ENCODE measurements at regions of chr12 and their contacts with region 1.

Region 1: DNA sequence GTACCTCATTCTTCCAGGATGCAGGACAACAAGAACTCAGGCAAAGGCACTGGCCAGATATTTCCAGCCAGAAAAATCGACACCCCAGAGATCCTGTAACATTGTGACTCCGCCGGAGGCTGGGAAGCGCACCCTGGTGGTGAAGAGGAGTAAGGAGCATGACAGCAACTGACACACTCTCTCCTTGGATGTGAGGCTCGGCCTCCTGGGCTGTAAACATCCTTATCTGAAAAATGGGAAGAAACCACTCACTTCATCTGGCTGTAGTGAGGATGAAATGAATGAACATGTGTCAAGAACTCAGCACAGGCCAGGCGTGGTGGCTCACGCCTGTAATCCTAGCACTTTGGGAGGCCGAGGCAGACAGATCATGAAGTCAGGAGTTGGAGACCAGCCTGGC is 27.5 kb downstream of the TCHP start:
- DNase-seq: peak; percentile 10
- H3K4me3 Mint-ChIP-seq: no peak overlapping the region
- H3K27ac Mint-ChIP-seq: peak overlapping the region; percentile 42
- H3K4me1 Mint-ChIP-seq: no peaks in the 10 kb centered on the region
- H3K27me3 Mint-ChIP-seq: no peaks in the 10 kb centered on the region

Region 2: DNA sequence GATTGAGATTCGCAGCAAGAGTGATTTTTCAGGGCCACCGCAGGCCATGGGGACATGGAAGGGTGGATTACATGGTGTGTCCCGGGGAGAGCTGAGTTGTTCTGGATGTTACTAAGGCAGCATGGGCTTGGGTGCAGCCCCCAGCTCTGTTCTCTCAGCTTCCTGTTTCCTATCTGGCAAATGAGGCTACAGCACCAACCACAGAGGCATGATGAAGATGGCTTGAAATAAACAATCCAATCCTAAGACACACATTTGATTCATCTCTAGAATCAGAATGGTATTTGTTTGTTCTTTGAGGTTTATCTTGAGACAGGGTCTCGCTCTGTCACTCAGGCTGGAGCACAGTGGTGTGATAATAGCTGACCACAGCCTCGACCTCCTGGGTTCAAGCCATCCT is 68.9 kb before region 1 on chr12:
- intact Hi-C with region 1: loop called (anchors 1 kb)
- DNase-seq: no peak
- H3K4me3 Mint-ChIP-seq: no peak overlapping the region
- H3K27ac Mint-ChIP-seq: no peak overlapping the region
- H3K4me1 Mint-ChIP-seq: peaks cover 6% of the 10 kb centered on the region
- H3K27me3 Mint-ChIP-seq: no peaks in the 10 kb centered on the region

Region 3: GRCh38 chr12:109892748-109893147 is 34.9 kb before region 1 on chr12:
- intact Hi-C with region 1: no loop called
- DNase-seq: peak; percentile 12
- H3K4me3 Mint-ChIP-seq: no peak overlapping the region
- H3K27ac Mint-ChIP-seq: no peak overlapping the region
- H3K4me1 Mint-ChIP-seq: peaks cover 43% of the 10 kb centered on the region
- H3K27me3 Mint-ChIP-seq: peaks cover 2% of the 10 kb centered on the region